ENCODE measurements at regions of chr5 and their contacts with region 1.

Region 1: GRCh38 chr5:122863240-122863639 is 17.8 kb downstream of the SNX24 start:
- DNase-seq: peak; percentile 73 to 80 (median 78)
- ATAC-seq: peak; percentile 94
- H3K4me3 ChIP-seq: no peak overlapping the region
- H3K27ac ChIP-seq: no peak overlapping the region
- H3K4me1 ChIP-seq: peaks cover 7 to 22% of the 10 kb centered on the region in 2 experiments; a peak in 3 of 5 replicates
- H3K27me3 ChIP-seq: no peaks in the 10 kb centered on the region
- CTCF ChIP-seq: no peak
- EP300 ChIP-seq: peak; percentile 78
- POLR2A ChIP-seq: no peak
- RAD21 ChIP-seq: no peak

Region 2: GRCh38 chr5:122831984-122832383 is 31.3 kb before region 1 on chr5:
- CTCF ChIA-PET with region 1: no interaction called
- POLR2A ChIA-PET with region 1: no interaction called
- in situ Hi-C with region 1: no loop called
- intact Hi-C with region 1: loop called (anchors 1 kb)
- DNase-seq: no peak
- ATAC-seq: no peak
- H3K4me3 ChIP-seq: no peak overlapping the region
- H3K27ac ChIP-seq: no peak overlapping the region
- H3K4me1 ChIP-seq: no peaks in the 10 kb centered on the region
- H3K27me3 ChIP-seq: no peaks in the 10 kb centered on the region
- CTCF ChIP-seq: no peak
- EP300 ChIP-seq: no peak
- POLR2A ChIP-seq: no peak
- RAD21 ChIP-seq: no peak

Region 3: DNA sequence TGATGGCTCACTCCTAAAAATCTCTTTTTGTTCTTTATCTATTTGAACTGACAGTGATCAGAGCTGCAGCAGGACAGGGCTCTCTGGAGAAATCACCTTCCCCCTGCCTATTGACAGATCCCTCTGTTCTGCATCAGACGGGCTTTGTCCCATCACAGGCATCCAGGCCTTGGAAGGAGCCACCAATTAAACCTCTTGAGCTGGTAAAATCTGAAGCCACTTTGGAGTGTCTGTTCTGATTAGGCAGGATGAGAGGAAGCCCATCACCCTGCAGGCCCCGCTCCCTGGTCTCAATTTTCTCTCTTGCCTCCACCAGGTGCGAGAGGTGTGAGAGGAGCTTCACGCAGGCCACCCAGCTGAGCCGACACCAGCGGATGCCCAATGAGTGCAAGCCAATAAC is 323.5 kb after region 1 on chr5:
- CTCF ChIA-PET with region 1: no interaction called
- POLR2A ChIA-PET with region 1: no interaction called
- in situ Hi-C with region 1: no loop called
- intact Hi-C with region 1: no loop called
- DNase-seq: no peak
- ATAC-seq: no peak
- H3K4me3 ChIP-seq: no peak overlapping the region
- H3K27ac ChIP-seq: no peak overlapping the region
- H3K4me1 ChIP-seq: no peaks in the 10 kb centered on the region
- H3K27me3 ChIP-seq: peaks cover 0 to 5% of the 10 kb centered on the region in 2 experiments; a peak in 2 of 5 replicates
- CTCF ChIP-seq: no peak
- EP300 ChIP-seq: no peak
- POLR2A ChIP-seq: no peak
- RAD21 ChIP-seq: no peak